SK-N-SH (cell line): ENCODE measurements at regions of chr13 and their contacts with region 1.

Region 1: DNA sequence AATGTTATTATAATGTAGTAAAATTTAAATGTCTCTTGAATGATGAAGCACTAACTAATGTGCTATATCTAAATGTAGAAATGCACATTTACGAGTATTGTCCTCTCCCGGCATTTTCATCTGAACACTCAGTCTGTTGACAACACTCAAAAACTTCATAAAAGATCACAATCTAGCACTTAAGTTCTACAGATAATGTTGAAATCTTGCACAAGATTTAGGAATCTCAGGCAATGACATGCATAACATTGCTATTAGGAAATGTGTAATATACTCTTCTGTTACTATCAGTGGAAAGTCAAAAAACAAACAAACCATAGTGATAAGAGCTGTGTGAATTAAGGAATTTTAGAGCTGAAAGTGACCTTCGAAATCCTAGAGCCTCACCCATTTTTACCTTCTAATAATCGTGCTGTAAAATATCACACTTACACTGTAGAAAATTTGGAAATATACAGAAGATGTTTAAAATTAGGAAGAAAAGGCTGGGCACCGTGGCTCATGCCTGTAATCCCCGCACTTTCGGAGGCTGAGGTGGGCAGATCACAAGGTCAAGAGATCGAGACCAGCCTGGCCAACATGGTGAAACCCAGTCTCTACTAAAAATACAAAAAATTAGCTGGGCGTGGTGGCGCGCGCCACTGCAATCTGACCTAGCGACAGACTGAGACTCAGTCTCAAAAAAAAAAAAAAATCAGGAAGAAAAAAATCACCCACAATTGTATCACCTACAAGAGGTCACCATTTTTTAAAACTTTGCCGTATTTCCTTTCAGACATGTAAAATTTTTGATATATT is 37.7 kb upstream of the XPO4 start:
- DNase-seq: no peak
- H3K4me3 ChIP-seq: no peak overlapping the region
- H3K27ac ChIP-seq: no peak overlapping the region
- H3K4me1 ChIP-seq: no peaks in the 10 kb centered on the region
- H3K27me3 ChIP-seq: no peaks in the 10 kb centered on the region
- CTCF ChIP-seq: no peak
- EP300 ChIP-seq: no peak
- RAD21 ChIP-seq: no peak

Region 2: DNA sequence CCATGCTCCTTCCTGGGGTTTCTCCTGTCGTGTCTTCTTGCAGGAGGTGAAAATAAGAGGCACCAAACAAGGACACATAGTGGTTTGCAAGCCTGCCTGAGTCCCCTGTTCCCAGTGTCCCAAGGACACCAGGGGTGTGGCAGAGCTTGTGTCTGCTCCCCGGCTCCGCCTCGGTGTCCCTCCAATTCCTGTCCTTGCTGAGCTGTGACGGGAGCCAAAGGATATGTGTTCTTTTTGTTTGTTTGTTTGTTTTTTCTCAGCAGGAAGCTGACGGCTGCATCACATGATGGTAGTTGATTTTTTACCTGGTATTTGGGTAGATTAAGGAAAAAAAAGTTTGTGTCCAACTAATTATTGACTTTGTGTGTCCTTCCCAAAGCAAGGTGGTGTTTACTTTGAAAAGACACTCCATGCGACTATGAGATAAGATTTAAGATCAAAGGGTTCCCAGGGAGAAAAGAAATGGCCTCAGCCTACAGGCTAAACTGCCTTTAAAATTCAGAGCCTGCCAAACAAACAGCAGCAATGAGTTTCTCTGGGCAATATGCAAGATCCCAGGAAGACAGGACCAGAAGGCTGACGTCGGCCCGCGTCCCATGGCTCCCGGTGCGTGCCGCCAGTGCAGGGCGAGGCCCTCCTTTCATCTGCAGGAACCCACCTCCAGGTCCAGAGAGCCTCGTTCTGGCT is 13.1 kb after region 1 on chr13:
- CTCF ChIA-PET with region 1: interaction called, 15 read pairs
- POLR2A ChIA-PET with region 1: no interaction called
- DNase-seq: no peak
- H3K4me3 ChIP-seq: no peak overlapping the region
- H3K27ac ChIP-seq: no peak overlapping the region
- H3K4me1 ChIP-seq: no peaks in the 10 kb centered on the region
- H3K27me3 ChIP-seq: no peaks in the 10 kb centered on the region
- CTCF ChIP-seq: no peak
- EP300 ChIP-seq: no peak
- RAD21 ChIP-seq: no peak

Region 3: GRCh38 chr13:21176220-21176982 is 236.1 kb after region 1 on chr13 and contains the starts of genes MRPL57 and SKA3:
- CTCF ChIA-PET with region 1: interaction called, 10 read pairs
- POLR2A ChIA-PET with region 1: interaction called, 4 read pairs
- DNase-seq: peak; percentile 98
- H3K4me3 ChIP-seq: peak within 1 kb of the TSS; percentile 77 to 86
- H3K27ac ChIP-seq: peak within 1 kb of the TSS; percentile 87 to 94
- H3K4me1 ChIP-seq: peaks cover 3 to 5% of the 10 kb centered on the region in 2 experiments; a peak in 2 of 4 replicates
- H3K27me3 ChIP-seq: no peaks in the 10 kb centered on the region
- CTCF ChIP-seq: no peak
- EP300 ChIP-seq: no peak
- RAD21 ChIP-seq: no peak
- polyA plus RNA-seq, gene MRPL57: 16.4 and 19.9 TPM in 2 replicates
- polyA plus RNA-seq, gene SKA3: 5.9 and 6.4 TPM in 2 replicates